Activated CD8-positive, alpha-beta T cell treated with anti-CD3 and anti-CD28 coated beads, Interleukin-2, amount 10 ng/mL, durations not matched to agents 7 days and 5 days (primary cell): ENCODE measurements at regions of chr6 and their contacts with region 1.

Region 1: GRCh38 chr6:45714741-45715507 is 300.7 kb downstream of the CLIC5 start:
- DNase-seq: peak; percentile 68
- ATAC-seq: peak; percentile 78
- H3K4me3 Mint-ChIP-seq: no peak overlapping the region
- H3K27ac Mint-ChIP-seq: no peak overlapping the region
- H3K4me1 Mint-ChIP-seq: peaks cover 42% of the 10 kb centered on the region
- H3K27me3 Mint-ChIP-seq: no peaks in the 10 kb centered on the region

Region 2: DNA sequence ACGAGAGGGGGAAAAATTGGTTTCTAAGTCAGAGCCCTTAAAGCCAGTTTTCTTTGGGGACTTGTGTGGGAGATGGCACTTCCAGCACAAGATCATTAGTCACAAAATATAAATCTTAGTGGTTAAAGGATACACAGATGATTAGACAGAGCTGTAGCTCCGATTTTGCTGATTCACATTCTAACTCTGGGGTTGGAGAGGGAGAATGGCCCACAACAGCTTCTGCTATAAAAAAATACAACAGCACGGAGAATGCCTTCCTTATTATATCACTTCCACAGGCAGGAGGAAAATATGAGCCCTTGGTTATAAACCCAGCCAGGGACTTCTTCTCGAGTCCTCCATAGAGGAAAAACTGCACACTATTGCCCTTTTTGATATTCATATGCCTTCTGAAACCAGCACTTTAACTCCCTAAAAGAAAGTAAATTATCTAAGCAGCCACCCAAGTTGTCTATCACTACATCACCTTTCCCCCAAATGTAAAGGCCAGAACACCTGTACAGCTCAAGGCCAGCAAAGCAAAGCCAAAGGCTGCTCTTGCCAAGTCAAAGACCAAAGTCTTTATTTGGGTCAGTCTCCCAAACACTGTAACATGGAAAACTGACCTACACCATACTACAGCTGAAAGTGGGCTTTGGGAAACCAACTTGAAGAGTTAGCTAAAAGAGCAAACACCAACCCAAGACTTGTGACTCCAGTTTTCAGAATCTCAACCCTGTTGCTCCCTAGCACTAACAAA is 1598.1 kb before region 1 on chr6:
- CTCF ChIA-PET with region 1: no interaction called
- POLR2A ChIA-PET with region 1: no interaction called
- DNase-seq: no peak
- ATAC-seq: no peak
- H3K4me3 Mint-ChIP-seq: no peak overlapping the region
- H3K27ac Mint-ChIP-seq: no peak overlapping the region
- H3K4me1 Mint-ChIP-seq: peaks cover 52% of the 10 kb centered on the region
- H3K27me3 Mint-ChIP-seq: no peaks in the 10 kb centered on the region

Region 3: DNA sequence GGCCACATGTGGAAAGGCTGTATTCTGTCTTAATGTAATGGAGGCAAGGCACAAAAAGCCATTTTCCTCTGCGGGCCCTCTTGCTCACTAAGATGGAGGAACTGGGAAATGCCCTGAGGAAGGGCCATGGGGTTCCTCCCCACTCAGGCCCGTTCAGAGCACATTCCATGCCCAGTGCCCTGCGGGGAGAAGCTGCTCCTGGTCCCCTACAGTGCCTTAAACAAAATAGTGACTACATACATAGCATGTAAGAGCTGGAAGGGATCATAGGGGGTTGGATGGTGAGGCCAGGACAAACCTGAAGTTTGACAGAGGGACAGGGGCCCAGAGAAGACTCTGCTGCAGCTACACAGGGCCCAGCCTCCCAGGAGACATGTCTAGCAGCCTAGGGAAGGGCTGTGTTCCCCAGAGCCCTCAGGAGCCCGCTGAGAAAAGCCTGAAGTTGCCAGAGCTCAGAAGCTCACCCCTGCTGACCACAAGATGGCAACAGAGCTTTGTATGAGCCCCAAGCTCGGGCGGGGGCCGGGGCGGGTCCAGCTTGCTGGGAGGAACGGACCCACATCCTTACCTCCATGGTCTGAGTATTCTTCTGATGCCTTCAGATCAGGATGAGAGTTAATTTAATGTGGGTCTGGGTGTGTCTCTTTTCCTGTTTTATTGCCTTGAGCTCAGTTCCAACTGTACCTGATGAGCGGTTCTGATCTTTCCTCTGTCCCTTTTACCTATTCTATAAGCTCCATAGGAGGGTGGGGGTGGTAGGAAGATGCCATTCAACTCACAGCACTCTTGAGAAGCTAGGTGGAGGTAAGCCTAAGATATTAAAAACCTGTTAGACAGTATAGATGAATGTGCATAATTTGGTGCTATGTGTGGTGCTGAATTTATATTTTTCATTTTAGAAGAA is 1084.5 kb before region 1 on chr6:
- CTCF ChIA-PET with region 1: interaction called, 17 read pairs
- POLR2A ChIA-PET with region 1: no interaction called
- DNase-seq: peak; percentile 40
- ATAC-seq: peak; percentile 67
- H3K4me3 Mint-ChIP-seq: no peak overlapping the region
- H3K27ac Mint-ChIP-seq: no peak overlapping the region
- H3K4me1 Mint-ChIP-seq: peaks cover 7% of the 10 kb centered on the region
- H3K27me3 Mint-ChIP-seq: peaks cover 8% of the 10 kb centered on the region

Region 4: GRCh38 chr6:44655412-44656342 is 1059.2 kb before region 1 on chr6:
- CTCF ChIA-PET with region 1: interaction called, 12 read pairs
- POLR2A ChIA-PET with region 1: no interaction called
- DNase-seq: peak; percentile 82
- ATAC-seq: peak; percentile 81
- H3K4me3 Mint-ChIP-seq: peak overlapping the region; percentile 48
- H3K27ac Mint-ChIP-seq: peak overlapping the region; percentile 69
- H3K4me1 Mint-ChIP-seq: peaks cover 7% of the 10 kb centered on the region
- H3K27me3 Mint-ChIP-seq: peaks cover 7% of the 10 kb centered on the region

Region 5: GRCh38 chr6:45377554-45378333 is 337.2 kb before region 1 on chr6 and contains the start of gene SUPT3H:
- CTCF ChIA-PET with region 1: interaction called, 20 read pairs
- POLR2A ChIA-PET with region 1: no interaction called
- DNase-seq: peak; percentile 93
- ATAC-seq: peak; percentile 90
- H3K4me3 Mint-ChIP-seq: peak within 1 kb of the TSS; percentile 98
- H3K27ac Mint-ChIP-seq: peak within 1 kb of the TSS; percentile 100
- H3K4me1 Mint-ChIP-seq: peaks cover 18% of the 10 kb centered on the region
- H3K27me3 Mint-ChIP-seq: no peaks in the 10 kb centered on the region
- total RNA-seq, gene SUPT3H: 6.4 to 9.1 TPM

Region 6: DNA sequence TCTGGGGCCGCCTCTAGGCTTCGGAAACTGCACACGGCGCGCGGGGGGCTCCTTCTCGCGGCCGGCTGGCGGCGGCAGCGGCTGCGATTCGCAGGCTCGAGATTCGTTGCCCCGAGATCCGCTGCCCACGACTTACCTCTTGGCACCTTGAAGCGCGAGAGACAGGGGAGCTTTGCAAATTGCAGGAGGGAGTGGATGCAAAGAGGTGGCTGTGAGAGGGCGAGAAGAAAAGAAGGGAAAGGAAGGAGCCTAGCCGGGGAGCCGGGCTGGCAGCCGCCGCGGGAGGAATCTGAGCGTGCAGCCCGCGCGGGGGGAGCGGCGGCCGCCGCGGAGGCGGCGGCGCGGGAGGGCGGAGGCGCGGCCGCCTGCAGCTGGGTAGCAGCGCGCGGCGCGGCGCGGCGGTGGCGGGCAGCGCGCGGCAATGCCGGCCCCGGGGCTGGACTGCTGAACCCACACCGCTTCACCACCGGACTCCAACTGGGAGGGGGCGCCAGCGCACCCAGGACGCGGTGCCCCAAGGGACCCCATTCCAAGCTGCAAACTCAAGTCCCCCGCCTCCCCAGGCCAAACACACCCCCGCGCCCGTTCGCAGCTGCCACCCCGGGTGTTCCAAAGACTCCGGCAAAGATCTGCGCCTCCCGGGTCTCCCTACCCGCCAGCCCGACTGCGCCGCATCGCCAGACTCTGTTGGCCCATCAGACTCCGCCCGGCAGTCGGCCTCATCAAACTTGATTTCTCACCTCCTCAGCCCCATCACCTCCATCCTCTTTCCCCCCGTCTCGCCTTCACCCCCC is 293.0 kb before region 1 on chr6:
- CTCF ChIA-PET with region 1: interaction called, 27 read pairs
- POLR2A ChIA-PET with region 1: interaction called, 3 read pairs
- DNase-seq: peak; percentile 57
- ATAC-seq: peak; percentile 38
- H3K4me3 Mint-ChIP-seq: peak overlapping the region; percentile 88
- H3K27ac Mint-ChIP-seq: peak overlapping the region; percentile 82
- H3K4me1 Mint-ChIP-seq: peaks cover 37% of the 10 kb centered on the region
- H3K27me3 Mint-ChIP-seq: peaks cover 38% of the 10 kb centered on the region

Region 7: GRCh38 chr6:45772886-45773495 is 58.1 kb after region 1 on chr6:
- CTCF ChIA-PET with region 1: no interaction called
- POLR2A ChIA-PET with region 1: no interaction called
- DNase-seq: no peak
- ATAC-seq: no peak
- H3K4me3 Mint-ChIP-seq: no peak overlapping the region
- H3K27ac Mint-ChIP-seq: no peak overlapping the region
- H3K4me1 Mint-ChIP-seq: no peaks in the 10 kb centered on the region
- H3K27me3 Mint-ChIP-seq: peaks cover 3% of the 10 kb centered on the region

Region 8: GRCh38 chr6:45922728-45923351 is 207.9 kb after region 1 on chr6:
- CTCF ChIA-PET with region 1: interaction called, 35 read pairs
- POLR2A ChIA-PET with region 1: interaction called, 4 read pairs
- DNase-seq: peak; percentile 73
- ATAC-seq: peak; percentile 63
- H3K4me3 Mint-ChIP-seq: no peak overlapping the region
- H3K27ac Mint-ChIP-seq: no peak overlapping the region
- H3K4me1 Mint-ChIP-seq: peaks cover 20% of the 10 kb centered on the region
- H3K27me3 Mint-ChIP-seq: no peaks in the 10 kb centered on the region